ENCODE measurements at regions of chr6 and their contacts with region 1.

Region 1: DNA sequence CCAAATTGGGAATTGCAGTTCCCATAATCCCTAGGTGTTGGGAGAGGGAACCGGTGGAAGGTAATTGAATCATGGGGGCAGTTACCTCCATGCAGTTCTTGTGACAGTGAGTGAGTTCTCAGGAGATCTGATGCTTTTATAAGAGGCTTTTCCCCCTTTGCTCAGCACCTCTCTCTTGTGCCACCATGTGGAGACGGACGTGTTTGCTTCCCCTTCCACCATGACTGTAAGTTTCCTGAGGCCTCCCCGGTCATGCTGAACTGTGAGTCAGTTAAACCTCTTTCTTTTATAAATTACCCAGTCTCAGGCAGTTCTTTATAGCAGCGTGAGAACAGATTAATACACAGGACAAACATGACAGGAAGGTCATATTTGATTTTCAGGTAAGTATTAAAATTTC is 25.3 kb upstream of the HECA start:
- DNase-seq: peak in 12 of 35 experiments; percentile 8 to 40 (median 25)
- ATAC-seq: no peak
- H3K4me3 ChIP-seq: no peak overlapping the region
- H3K4me3 Mint-ChIP-seq: no peak overlapping the region
- H3K27ac ChIP-seq: no peak overlapping the region
- H3K27ac Mint-ChIP-seq: peak overlapping the region; percentile 41 to 96
- H3K4me1 ChIP-seq: peaks cover 30 to 31% of the 10 kb centered on the region in 2 experiments
- H3K4me1 Mint-ChIP-seq: peaks cover 54 to 56% (median 56%) of the 10 kb centered on the region in 3 donors
- H3K27me3 ChIP-seq: no peaks in the 10 kb centered on the region
- H3K27me3 Mint-ChIP-seq: no peaks in the 10 kb centered on the region

Region 2: DNA sequence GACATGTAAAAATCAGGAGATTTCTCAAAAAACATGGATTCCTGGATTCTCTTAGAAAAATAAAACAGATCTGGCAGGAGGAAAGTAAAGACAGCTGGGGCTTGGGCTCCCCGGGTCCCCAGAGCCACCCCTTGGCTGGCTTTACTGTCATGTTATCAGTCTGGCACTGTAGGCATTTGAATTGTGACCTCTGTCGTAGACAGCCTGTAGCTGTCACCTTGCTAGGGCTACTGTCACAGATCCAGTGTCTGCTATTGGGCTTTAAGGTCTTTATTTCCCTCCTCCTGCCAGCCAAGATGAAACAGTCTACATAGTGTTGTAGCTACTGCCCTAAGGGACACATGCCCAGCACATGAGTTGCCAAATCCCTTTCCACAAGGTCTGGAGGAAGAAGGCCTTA is 43.5 kb before region 1 on chr6:
- CTCF ChIA-PET with region 1: no interaction called
- POLR2A ChIA-PET with region 1: interaction called in 1 of 2 experiments, 16 read pairs
- DNase-seq: no peak
- ATAC-seq: no peak
- H3K4me3 ChIP-seq: no peak overlapping the region
- H3K4me3 Mint-ChIP-seq: no peak overlapping the region
- H3K27ac ChIP-seq: no peak overlapping the region
- H3K27ac Mint-ChIP-seq: no peak overlapping the region
- H3K4me1 ChIP-seq: no peaks in the 10 kb centered on the region
- H3K4me1 Mint-ChIP-seq: peaks cover 0 to 6% (median 0%) of the 10 kb centered on the region in 3 donors
- H3K27me3 ChIP-seq: no peaks in the 10 kb centered on the region
- H3K27me3 Mint-ChIP-seq: no peaks in the 10 kb centered on the region

Region 3: DNA sequence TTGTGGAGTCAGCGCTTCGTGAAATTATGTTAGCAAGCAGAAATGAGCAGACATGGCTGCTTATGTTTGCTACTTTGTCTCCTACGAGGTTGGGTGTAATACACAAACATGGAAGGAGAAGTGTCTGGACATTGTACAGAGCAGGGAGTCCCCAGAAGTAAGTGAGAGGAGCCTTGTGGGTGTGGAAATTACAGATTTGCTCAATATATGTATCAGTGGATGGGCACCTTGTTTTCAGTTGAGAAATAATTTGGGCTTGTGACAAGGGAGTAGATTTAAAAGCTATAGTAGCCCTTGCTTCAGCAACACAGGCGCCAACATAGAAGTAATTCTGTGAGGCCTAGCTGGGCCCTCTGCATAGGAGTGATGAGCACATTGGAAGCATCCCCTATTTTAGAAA is 74.5 kb after region 1 on chr6:
- CTCF ChIA-PET with region 1: no interaction called
- POLR2A ChIA-PET with region 1: no interaction called
- DNase-seq: no peak
- ATAC-seq: peak in 2 of 4 experiments; percentile 11 to 20
- H3K4me3 ChIP-seq: no peak overlapping the region
- H3K4me3 Mint-ChIP-seq: no peak overlapping the region
- H3K27ac ChIP-seq: peak overlapping the region; percentile 8
- H3K27ac Mint-ChIP-seq: peak overlapping the region; percentile 62 to 67
- H3K4me1 ChIP-seq: no peaks in the 10 kb centered on the region
- H3K4me1 Mint-ChIP-seq: peaks cover 51 to 76% (median 71%) of the 10 kb centered on the region in 3 donors
- H3K27me3 ChIP-seq: no peaks in the 10 kb centered on the region
- H3K27me3 Mint-ChIP-seq: no peaks in the 10 kb centered on the region

Region 4: DNA sequence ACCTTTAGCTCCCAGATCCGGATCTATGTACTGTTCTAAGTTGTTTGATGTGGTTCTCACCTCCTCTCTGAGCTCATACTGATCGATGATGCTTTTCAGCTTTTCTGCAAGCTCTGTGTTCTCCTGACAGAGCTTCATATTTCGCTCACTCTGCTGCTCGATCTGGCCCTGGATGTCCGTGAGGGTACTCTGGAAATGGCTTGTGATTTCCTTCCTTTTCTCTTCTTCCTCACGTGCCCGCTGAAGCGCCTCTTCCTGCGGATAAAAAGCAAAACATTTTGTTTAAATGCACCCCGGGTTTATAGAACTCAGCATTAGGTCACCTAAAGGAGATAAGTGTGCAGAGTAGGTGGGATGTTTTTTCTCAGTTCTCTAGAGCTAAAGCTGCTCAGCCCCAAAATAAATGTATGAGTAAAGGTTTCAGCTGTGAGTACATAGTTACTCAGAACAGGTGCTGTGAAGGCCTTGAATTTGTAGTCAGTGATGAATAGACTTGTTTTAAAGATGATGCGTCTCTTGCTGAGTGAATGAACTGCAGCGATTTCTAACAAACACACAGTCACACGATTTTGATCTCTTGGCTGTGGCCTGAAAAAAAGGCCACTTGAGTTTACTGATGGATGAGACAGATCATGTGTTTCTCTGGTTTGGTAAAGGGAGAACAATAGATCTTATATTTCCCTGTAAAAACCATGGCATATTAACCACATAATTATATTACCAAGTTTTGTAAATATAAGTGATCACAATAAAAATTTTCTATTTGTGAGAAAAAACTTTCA is 153.2 kb after region 1 on chr6:
- CTCF ChIA-PET with region 1: no interaction called
- POLR2A ChIA-PET with region 1: no interaction called
- DNase-seq: peak in 19 of 35 experiments; percentile 1 to 62 (median 12)
- ATAC-seq: peak; percentile 72 to 98 (median 94)
- H3K4me3 ChIP-seq: peak overlapping the region; percentile 23 to 44
- H3K4me3 Mint-ChIP-seq: peak overlapping the region; percentile 58 to 69 (median 63)
- H3K27ac ChIP-seq: peak overlapping the region; percentile 45
- H3K27ac Mint-ChIP-seq: peak overlapping the region; percentile 87 to 93
- H3K4me1 ChIP-seq: peaks cover 10 to 14% of the 10 kb centered on the region in 2 experiments
- H3K4me1 Mint-ChIP-seq: peaks cover 28 to 40% (median 37%) of the 10 kb centered on the region in 3 donors
- H3K27me3 ChIP-seq: no peaks in the 10 kb centered on the region
- H3K27me3 Mint-ChIP-seq: no peaks in the 10 kb centered on the region

Region 5: DNA sequence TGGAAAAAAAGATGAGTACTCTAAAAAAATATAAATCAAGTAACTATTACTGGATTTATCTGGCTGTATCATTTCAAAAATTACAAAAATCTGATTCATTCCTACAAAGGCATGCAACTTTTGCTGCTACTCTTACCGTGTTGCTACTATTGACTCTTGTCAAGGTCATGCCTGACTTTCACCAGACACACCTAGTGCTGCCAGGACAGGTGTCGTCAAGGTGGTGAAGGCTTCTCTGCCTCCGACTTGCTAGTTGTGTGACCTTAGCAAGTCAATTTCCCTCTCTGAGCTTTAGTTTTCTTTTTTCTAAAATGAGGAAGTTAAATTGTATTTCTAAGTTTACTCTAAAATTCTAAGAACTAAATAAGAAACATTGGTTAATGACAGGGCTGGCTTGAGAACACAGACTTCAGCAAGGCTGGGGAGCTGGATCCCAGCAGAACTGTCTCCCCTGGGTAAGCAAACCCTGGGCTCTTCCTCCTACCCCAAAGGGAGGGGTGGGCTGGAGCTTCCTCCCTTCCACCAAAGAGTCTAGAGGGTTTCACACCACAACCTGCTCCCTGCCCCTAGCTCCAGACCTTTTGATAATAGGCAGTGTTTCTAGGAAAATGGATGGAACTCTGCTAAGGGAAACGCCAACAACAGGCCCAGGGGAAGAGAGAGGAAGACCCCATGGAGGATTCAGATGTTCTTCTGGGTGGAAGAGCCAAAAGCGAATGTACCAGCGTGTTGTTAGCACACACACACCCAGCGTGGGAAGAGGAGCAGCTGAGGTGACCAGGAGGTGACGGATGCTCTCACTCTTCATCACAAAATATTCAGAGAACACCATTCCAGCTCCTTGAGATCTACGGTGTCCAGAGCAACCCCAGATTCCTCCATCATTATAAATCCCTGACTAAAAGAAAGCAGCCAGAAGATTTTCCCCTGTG is 312.8 kb after region 1 on chr6:
- CTCF ChIA-PET with region 1: interaction called in 1 of 2 experiments, 13 read pairs
- POLR2A ChIA-PET with region 1: no interaction called
- DNase-seq: no peak
- ATAC-seq: no peak
- H3K4me3 ChIP-seq: no peak overlapping the region
- H3K4me3 Mint-ChIP-seq: no peak overlapping the region
- H3K27ac ChIP-seq: no peak overlapping the region
- H3K27ac Mint-ChIP-seq: no peak overlapping the region
- H3K4me1 ChIP-seq: no peaks in the 10 kb centered on the region
- H3K4me1 Mint-ChIP-seq: no peaks in the 10 kb centered on the region
- H3K27me3 ChIP-seq: no peaks in the 10 kb centered on the region
- H3K27me3 Mint-ChIP-seq: peaks cover 9 to 11% of the 10 kb centered on the region in 2 donors

Measured in T-cell (primary cell).